Mammary epithelial cell (primary cell): ENCODE measurements at regions of chr19 and their contacts with region 1.

Region 1: GRCh38 chr19:52189735-52190486 is at the start of gene PPP2R1A:
- DNase-seq: peak; percentile 100
- H3K4me3 ChIP-seq: peak within 1 kb of the TSS; percentile 70 to 95 (median 88)
- H3K27ac ChIP-seq: peak within 1 kb of the TSS; percentile 91
- H3K4me1 ChIP-seq: peaks cover 18% of the 10 kb centered on the region
- H3K27me3 ChIP-seq: no peaks in the 10 kb centered on the region
- CTCF ChIP-seq: no peak
- total RNA-seq, gene PPP2R1A: 213 to 299 TPM

Region 2: GRCh38 chr19:52139252-52140031 is 50.5 kb before region 1 on chr19 and contains the start of gene ZNF616:
- CTCF ChIA-PET with region 1: no interaction called
- dilution Hi-C with region 1: no loop called
- in situ Hi-C with region 1: no loop called
- intact Hi-C with region 1: loop called (anchors 1 kb)
- DNase-seq: peak; percentile 92
- H3K4me3 ChIP-seq: peak within 1 kb of the TSS; percentile 85 to 86 (median 85)
- H3K27ac ChIP-seq: peak within 1 kb of the TSS; percentile 58
- H3K4me1 ChIP-seq: peaks cover 6% of the 10 kb centered on the region
- H3K27me3 ChIP-seq: no peaks in the 10 kb centered on the region
- CTCF ChIP-seq: peak; percentile 45 to 82
- total RNA-seq, gene ZNF616: 9.7 to 10.3 TPM